ENCODE measurements at regions of chr5 and their contacts with region 1.

Region 1: DNA sequence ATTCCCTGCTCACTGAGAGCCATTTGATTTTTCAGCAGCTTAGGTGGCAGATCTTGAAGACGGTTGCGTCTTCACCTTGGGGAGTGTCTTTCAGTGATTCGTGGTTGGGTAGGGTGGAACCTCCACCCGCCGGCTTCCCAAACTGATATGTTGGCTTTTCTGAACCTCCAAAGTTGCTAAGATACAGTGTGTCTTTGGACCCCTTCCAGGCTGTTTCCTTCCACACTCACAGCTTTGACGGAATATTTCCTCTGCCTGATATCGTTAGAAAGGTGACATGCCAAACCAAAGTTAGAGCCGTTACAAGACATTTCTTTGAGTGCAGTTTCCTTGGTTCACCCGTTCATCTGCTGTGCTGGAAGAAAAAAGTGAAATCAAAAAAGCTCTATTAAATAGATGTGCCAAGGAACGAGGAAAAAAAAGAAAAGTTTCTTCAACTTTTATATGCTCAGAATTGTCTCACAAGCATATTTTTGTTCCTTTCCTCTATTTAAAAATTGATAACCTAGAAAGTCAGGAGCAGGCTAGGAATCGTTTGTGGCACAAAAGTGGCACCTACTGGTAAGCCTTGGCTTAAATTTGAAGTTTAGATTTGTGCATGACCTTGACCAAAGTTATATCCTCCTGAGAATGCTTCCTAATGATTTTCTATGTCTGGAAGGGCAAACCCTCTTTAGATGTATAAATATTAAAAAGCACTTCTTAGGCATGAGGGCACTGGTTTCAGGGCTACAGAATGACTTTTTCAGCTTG is 270.7 kb upstream of the WWC1 start:
- DNase-seq: no peak
- H3K4me3 Mint-ChIP-seq: no peak overlapping the region
- H3K27ac Mint-ChIP-seq: no peak overlapping the region
- H3K4me1 Mint-ChIP-seq: no peaks in the 10 kb centered on the region
- H3K27me3 Mint-ChIP-seq: peaks cover 100% of the 10 kb centered on the region
- CTCF ChIP-seq: no peak

Region 2: GRCh38 chr5:167389537-167389936 is 631.2 kb before region 1 on chr5:
- CTCF ChIA-PET with region 1: no interaction called
- intact Hi-C with region 1: no loop called
- DNase-seq: no peak
- H3K4me3 Mint-ChIP-seq: no peak overlapping the region
- H3K27ac Mint-ChIP-seq: no peak overlapping the region
- H3K4me1 Mint-ChIP-seq: no peaks in the 10 kb centered on the region
- H3K27me3 Mint-ChIP-seq: no peaks in the 10 kb centered on the region
- CTCF ChIP-seq: no peak

Region 3: DNA sequence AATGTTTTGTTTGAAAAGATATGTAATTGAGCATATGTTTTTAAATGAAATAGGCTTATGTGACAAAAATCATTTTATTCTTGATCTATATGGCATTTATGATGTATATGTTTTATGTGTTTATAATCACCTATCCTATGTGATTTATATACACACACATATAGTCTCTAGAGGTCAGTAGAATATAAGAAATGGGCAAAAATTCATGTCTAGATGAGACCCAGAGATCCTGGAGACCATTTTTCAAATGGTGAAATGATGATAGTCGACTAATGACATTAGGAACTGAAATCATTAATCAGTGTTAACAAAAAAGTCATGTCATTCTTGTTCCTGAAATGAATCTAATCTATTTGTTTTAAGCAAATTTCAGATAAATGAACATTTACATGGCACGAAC is 438.4 kb before region 1 on chr5:
- CTCF ChIA-PET with region 1: no interaction called
- intact Hi-C with region 1: loop called (anchors 5 kb)
- DNase-seq: no peak
- H3K4me3 Mint-ChIP-seq: no peak overlapping the region
- H3K27ac Mint-ChIP-seq: no peak overlapping the region
- H3K4me1 Mint-ChIP-seq: no peaks in the 10 kb centered on the region
- H3K27me3 Mint-ChIP-seq: peaks cover 33% of the 10 kb centered on the region
- CTCF ChIP-seq: no peak

Region 4: DNA sequence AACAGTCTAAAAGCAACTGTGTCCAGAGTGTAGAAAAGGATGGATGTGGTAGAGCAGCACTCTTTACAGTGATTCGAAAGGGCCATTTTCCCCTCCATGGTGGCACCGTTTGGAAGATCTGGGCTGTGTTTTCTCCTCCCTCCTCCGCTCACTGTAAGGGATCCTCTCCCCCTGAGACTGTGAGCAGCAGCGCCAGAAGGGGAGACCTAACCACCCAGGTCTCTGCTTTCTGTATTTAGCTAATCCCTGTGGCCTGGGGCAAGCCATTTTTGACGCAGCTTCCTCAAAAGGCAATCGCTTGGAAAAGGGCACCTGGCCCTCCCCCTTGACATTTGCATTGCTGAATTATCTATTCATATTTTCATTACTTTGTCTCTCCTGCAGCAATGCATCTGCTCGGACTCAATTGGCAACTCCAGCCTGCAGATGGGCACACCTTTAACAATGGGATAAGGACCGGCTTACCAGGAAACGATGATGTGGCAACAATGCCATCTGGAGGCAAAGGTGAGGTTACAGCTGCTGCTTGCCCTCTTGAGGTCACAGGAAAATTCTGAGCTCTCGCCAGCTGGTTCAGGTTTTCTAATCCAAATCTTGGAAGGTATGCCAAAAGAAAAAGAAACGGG is 26.4 kb after region 1 on chr5:
- CTCF ChIA-PET with region 1: no interaction called
- intact Hi-C with region 1: no loop called
- DNase-seq: peak; percentile 71
- H3K4me3 Mint-ChIP-seq: no peak overlapping the region
- H3K27ac Mint-ChIP-seq: no peak overlapping the region
- H3K4me1 Mint-ChIP-seq: peaks cover 12% of the 10 kb centered on the region
- H3K27me3 Mint-ChIP-seq: peaks cover 90% of the 10 kb centered on the region
- CTCF ChIP-seq: peak; percentile 64

Region 5: GRCh38 chr5:168390491-168390890 is 369.8 kb after region 1 on chr5:
- CTCF ChIA-PET with region 1: no interaction called
- intact Hi-C with region 1: no loop called
- DNase-seq: no peak
- H3K4me3 Mint-ChIP-seq: no peak overlapping the region
- H3K27ac Mint-ChIP-seq: peak overlapping the region; percentile 28
- H3K4me1 Mint-ChIP-seq: peaks cover 32% of the 10 kb centered on the region
- H3K27me3 Mint-ChIP-seq: no peaks in the 10 kb centered on the region
- CTCF ChIP-seq: no peak

Measured in Calu3 (cell line).